K562 (cell line): ENCODE measurements at regions of chr19 and their contacts with region 1.

Region 1: GRCh38 chr19:3593156-3593555 is 7.9 kb downstream of the GIPC3 start:
- DNase-seq: no peak
- ATAC-seq: no peak
- H3K4me3 ChIP-seq: no peak overlapping the region
- H3K27ac ChIP-seq: no peak overlapping the region
- H3K4me1 ChIP-seq: peaks cover 0 to 14% of the 10 kb centered on the region in 2 experiments; a peak in 1 of 5 replicates
- H3K27me3 ChIP-seq: no peaks in the 10 kb centered on the region
- CTCF ChIP-seq: no peak; a peak in 1 of 6 replicates
- EP300 ChIP-seq: no peak
- POLR2A ChIP-seq: no peak; the same call in 1 of the 2 replicates
- RAD21 ChIP-seq: no peak

Region 2: GRCh38 chr19:3580156-3580934 is 12.8 kb before region 1 on chr19:
- CTCF ChIA-PET with region 1: no interaction called
- POLR2A ChIA-PET with region 1: interaction called, 14 read pairs
- in situ Hi-C with region 1: no loop called
- intact Hi-C with region 1: no loop called
- DNase-seq: peak in 2 of 4 experiments; percentile 60 to 80
- ATAC-seq: peak; percentile 67
- H3K4me3 ChIP-seq: no peak overlapping the region
- H3K27ac ChIP-seq: peak overlapping the region; percentile 52
- H3K4me1 ChIP-seq: peaks cover 30 to 56% of the 10 kb centered on the region in 2 experiments
- H3K27me3 ChIP-seq: no peaks in the 10 kb centered on the region
- CTCF ChIP-seq: 0 out of 6 replicates have a peak, but pooled peaks of 1 of the 3 experiments have one; percentile 2
- EP300 ChIP-seq: no peak
- POLR2A ChIP-seq: no peak
- RAD21 ChIP-seq: peak in 1 of 2 experiments; percentile 14; a peak in 1 of 4 replicates

Region 3: DNA sequence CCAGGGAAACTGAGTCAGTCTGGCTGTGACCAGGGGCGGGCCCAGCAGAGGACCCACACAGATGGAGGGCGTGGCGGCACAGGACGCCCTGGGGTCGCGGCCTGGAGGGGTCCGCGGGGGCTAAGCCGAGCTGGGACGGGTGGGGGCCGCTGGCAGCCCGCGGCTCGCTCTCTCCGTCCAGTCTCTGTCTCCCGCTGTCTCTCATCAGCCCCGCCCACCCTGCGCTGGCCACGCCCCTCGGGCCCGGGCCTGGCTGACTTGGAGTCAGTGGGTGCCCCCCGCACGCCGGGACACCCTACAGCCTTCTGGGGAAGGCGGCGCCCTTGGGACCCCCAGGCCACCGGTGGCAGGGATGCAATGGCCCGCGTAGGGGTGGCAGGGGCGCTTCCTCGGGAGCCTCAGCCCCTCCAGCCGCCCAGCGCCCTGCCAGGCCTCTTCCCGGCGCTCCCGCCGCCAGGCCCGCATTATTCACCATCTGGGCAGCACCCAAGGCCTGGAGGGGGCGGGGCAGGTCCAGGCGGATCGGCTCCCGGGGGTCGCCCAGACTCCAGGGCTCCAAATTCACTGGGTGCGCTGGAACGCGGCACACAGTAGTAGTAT is 13.6 kb after region 1 on chr19 and contains the start of gene TBXA2R:
- CTCF ChIA-PET with region 1: no interaction called
- POLR2A ChIA-PET with region 1: interaction called, 29 read pairs
- in situ Hi-C with region 1: no loop called
- intact Hi-C with region 1: no loop called
- DNase-seq: peak; percentile 91 to 94 (median 92)
- ATAC-seq: peak; percentile 89
- H3K4me3 ChIP-seq: peak within 1 kb of the TSS; percentile 89
- H3K27ac ChIP-seq: peak within 1 kb of the TSS; percentile 98
- H3K4me1 ChIP-seq: peaks cover 38 to 88% of the 10 kb centered on the region in 2 experiments
- H3K27me3 ChIP-seq: no peaks in the 10 kb centered on the region
- CTCF ChIP-seq: no peak
- EP300 ChIP-seq: no peak
- POLR2A ChIP-seq: peak; percentile 58
- RAD21 ChIP-seq: no peak
- polyA plus RNA-seq, gene TBXA2R: 1.5 to 2.6 TPM